ENCODE measurements at regions of chr12 and their contacts with region 1.

Region 1: GRCh38 chr12:53625946-53626701 is at the start of gene ATF7:
- DNase-seq: peak; percentile 100
- H3K4me3 Mint-ChIP-seq: peak within 1 kb of the TSS; percentile 99
- H3K27ac Mint-ChIP-seq: peak within 1 kb of the TSS; percentile 88
- H3K4me1 Mint-ChIP-seq: peaks cover 29% of the 10 kb centered on the region
- H3K27me3 Mint-ChIP-seq: peaks cover 4% of the 10 kb centered on the region
- total RNA-seq, gene ATF7: 23.0 and 31.5 TPM in 2 replicates

Region 2: GRCh38 chr12:53352331-53353256 is 273.5 kb before region 1 on chr12:
- intact Hi-C with region 1: no loop called
- DNase-seq: peak; percentile 95
- H3K4me3 Mint-ChIP-seq: no peak overlapping the region
- H3K27ac Mint-ChIP-seq: peak overlapping the region; percentile 31
- H3K4me1 Mint-ChIP-seq: peaks cover 6% of the 10 kb centered on the region
- H3K27me3 Mint-ChIP-seq: no peaks in the 10 kb centered on the region

Region 3: GRCh38 chr12:53379389-53380103 is 246.6 kb before region 1 on chr12:
- intact Hi-C with region 1: loop called (anchors 1 kb)
- DNase-seq: peak; percentile 100
- H3K4me3 Mint-ChIP-seq: no peak overlapping the region
- H3K27ac Mint-ChIP-seq: no peak overlapping the region
- H3K4me1 Mint-ChIP-seq: peaks cover 34% of the 10 kb centered on the region
- H3K27me3 Mint-ChIP-seq: no peaks in the 10 kb centered on the region

Region 4: DNA sequence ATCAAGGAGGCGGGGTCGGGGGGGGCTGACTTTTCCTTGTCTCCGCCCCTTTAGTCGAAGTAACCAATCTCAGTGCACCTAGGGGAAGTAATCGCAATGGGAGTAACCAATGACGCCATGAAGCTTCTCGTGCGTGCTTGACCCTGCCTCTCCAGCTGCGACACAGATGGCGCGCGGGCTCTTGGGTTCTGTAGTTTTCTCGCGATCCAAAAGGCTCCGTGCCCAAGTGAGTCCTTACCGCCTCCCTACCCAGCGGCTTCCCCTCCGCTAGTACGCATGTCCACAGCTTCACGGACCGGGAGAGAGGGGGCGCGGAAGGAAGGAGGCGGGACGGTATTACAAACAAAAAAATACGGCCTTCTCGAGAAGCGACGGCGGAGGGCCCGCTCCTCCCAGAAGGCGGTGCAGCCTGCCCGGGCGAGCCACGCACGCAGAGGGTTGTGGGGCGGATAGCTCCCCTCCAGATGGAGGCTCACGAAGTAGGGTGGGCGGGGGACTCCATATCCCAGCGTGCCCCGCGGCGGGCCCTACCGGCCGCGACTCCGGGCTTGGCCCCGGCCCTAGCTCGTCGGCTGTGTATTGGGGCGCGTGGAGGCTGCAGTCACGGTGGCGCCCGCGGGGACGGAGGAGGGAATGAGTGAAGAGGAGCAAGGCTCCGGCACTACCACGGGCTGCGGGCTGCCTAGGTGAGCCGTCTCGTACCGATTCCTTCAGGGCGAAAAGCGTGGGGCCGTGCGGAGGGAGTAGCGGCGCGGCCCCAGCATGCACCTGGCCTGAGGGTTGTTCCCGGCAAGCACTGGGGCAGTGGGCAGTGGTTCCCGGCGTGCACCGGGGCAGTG is 125.1 kb before region 1 on chr12 and contains the start of gene TARBP2:
- intact Hi-C with region 1: loop called (anchors 1 kb)
- DNase-seq: peak; percentile 98
- H3K4me3 Mint-ChIP-seq: peak within 1 kb of the TSS; percentile 93
- H3K27ac Mint-ChIP-seq: peak within 1 kb of the TSS; percentile 97
- H3K4me1 Mint-ChIP-seq: peaks cover 35% of the 10 kb centered on the region
- H3K27me3 Mint-ChIP-seq: no peaks in the 10 kb centered on the region
- total RNA-seq, gene TARBP2: 49.7 and 52.2 TPM in 2 replicates

Region 5: DNA sequence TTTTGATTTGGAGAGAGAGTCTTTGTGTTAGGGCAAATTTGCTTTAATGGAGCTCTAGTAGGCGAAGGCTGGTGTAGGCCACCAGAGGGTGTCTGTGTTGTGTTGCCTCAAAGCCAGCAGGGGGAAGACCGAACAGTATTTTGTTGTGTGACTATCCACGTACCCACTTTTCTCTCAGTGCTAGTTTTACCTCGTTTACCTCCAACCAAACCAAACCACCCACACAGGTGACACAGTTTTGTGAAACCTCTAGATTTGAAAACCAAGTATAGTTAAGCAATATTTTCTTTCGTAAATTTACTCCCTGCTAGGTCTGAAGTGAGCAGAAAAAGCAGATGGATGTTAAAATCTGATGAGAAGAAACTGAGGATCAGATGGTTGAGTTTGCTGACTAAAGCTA is 82.6 kb before region 1 on chr12:
- intact Hi-C with region 1: loop called (anchors 1 kb)
- DNase-seq: peak; percentile 85
- H3K4me3 Mint-ChIP-seq: no peak overlapping the region
- H3K27ac Mint-ChIP-seq: peak overlapping the region; percentile 72
- H3K4me1 Mint-ChIP-seq: peaks cover 9% of the 10 kb centered on the region
- H3K27me3 Mint-ChIP-seq: no peaks in the 10 kb centered on the region

Region 6: GRCh38 chr12:53561590-53561953 is 64.6 kb before region 1 on chr12:
- intact Hi-C with region 1: loop called (anchors 5 kb)
- DNase-seq: no peak
- H3K4me3 Mint-ChIP-seq: no peak overlapping the region
- H3K27ac Mint-ChIP-seq: peak overlapping the region; percentile 64
- H3K4me1 Mint-ChIP-seq: peaks cover 30% of the 10 kb centered on the region
- H3K27me3 Mint-ChIP-seq: no peaks in the 10 kb centered on the region

Region 7: GRCh38 chr12:53675651-53676453 is 49.7 kb after region 1 on chr12 and contains the start of gene ATP5MC2:
- intact Hi-C with region 1: loop called (anchors 1 kb)
- DNase-seq: peak; percentile 99
- H3K4me3 Mint-ChIP-seq: peak within 1 kb of the TSS; percentile 100
- H3K27ac Mint-ChIP-seq: peak within 1 kb of the TSS; percentile 99
- H3K4me1 Mint-ChIP-seq: peaks cover 24% of the 10 kb centered on the region
- H3K27me3 Mint-ChIP-seq: peaks cover 32% of the 10 kb centered on the region
- total RNA-seq, gene ATP5MC2: 408 and 411 TPM in 2 replicates

Region 8: DNA sequence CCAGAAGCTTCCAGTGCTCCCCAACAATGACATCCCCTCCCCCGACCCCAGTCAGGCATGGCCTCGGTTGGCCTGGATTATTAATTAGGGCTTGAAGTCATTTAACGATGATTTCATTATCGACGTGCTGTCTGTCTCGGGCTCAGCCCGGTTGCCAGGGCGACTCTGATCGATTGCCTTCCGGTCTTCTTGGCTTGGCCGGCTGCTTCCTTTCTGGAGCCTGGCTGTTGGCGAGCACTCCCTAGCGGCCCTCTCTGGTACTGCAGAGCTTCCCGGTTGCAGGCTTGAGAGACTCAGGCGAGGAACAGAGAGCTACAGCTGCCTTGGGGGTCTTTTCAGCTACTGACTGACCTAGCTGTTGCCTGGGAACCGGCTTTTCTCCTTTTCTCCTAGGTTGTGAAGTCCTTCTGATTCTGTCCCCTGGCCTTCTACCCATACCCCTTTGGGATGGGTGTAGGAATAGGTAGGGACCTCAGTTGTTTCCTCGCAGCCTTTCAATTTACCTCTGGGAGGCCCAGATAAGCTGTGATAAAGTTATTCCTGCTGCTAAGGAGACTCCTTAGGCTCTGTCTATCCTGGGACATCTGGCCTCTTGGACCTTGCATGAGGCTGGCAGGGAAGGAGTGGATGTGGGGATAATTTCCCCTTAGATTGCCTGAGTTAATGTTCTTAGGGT is 131.1 kb after region 1 on chr12:
- intact Hi-C with region 1: loop called (anchors 5 kb)
- DNase-seq: peak; percentile 95
- H3K4me3 Mint-ChIP-seq: peak overlapping the region; percentile 43
- H3K27ac Mint-ChIP-seq: peak overlapping the region; percentile 52
- H3K4me1 Mint-ChIP-seq: peaks cover 32% of the 10 kb centered on the region
- H3K27me3 Mint-ChIP-seq: peaks cover 37% of the 10 kb centered on the region